Dendritic cell treated with granulocyte-macrophage colony-stimulating factor and Interleukin-4, amounts not matched to agents 40 ng/mL and 50 ng/mL, for 4 days (primary cell): ENCODE measurements at regions of chr14 and their contacts with region 1.

Region 1: GRCh38 chr14:63727774-63728728 is at the start of gene SGPP1:
- H3K4me3 Mint-ChIP-seq: peak within 1 kb of the TSS; percentile 91
- H3K27ac Mint-ChIP-seq: peak within 1 kb of the TSS; percentile 87
- H3K4me1 Mint-ChIP-seq: peaks cover 36% of the 10 kb centered on the region
- H3K27me3 Mint-ChIP-seq: peaks cover 28% of the 10 kb centered on the region

Region 2: GRCh38 chr14:63299351-63300110 is 428.5 kb before region 1 on chr14:
- intact Hi-C with region 1: no loop called
- H3K4me3 Mint-ChIP-seq: no peak overlapping the region
- H3K27ac Mint-ChIP-seq: no peak overlapping the region
- H3K4me1 Mint-ChIP-seq: no peaks in the 10 kb centered on the region
- H3K27me3 Mint-ChIP-seq: no peaks in the 10 kb centered on the region

Region 3: DNA sequence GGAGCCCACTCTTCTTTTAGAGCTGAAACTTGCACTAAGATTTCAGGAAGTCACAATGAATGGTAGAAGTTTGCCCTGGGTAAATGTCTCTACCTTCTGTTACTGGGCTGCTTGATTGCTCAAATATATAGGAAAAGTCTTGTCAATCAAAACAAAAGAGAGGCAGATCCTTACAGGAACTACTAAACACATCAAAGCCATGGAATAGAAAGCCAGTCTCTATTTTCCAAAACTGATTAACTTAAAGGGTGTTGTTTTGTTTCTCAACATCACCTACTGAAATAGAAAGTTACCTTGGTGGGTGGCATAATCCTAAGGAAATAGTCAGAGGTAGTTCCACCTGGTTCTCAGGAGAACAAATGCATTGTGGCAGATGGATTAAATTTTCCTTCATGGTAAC is 409.2 kb before region 1 on chr14 and contains the start of gene GPHB5:
- intact Hi-C with region 1: no loop called
- H3K4me3 Mint-ChIP-seq: no peak within 1 kb of the TSS
- H3K27ac Mint-ChIP-seq: no peak within 1 kb of the TSS
- H3K4me1 Mint-ChIP-seq: no peaks in the 10 kb centered on the region
- H3K27me3 Mint-ChIP-seq: no peaks in the 10 kb centered on the region

Region 4: DNA sequence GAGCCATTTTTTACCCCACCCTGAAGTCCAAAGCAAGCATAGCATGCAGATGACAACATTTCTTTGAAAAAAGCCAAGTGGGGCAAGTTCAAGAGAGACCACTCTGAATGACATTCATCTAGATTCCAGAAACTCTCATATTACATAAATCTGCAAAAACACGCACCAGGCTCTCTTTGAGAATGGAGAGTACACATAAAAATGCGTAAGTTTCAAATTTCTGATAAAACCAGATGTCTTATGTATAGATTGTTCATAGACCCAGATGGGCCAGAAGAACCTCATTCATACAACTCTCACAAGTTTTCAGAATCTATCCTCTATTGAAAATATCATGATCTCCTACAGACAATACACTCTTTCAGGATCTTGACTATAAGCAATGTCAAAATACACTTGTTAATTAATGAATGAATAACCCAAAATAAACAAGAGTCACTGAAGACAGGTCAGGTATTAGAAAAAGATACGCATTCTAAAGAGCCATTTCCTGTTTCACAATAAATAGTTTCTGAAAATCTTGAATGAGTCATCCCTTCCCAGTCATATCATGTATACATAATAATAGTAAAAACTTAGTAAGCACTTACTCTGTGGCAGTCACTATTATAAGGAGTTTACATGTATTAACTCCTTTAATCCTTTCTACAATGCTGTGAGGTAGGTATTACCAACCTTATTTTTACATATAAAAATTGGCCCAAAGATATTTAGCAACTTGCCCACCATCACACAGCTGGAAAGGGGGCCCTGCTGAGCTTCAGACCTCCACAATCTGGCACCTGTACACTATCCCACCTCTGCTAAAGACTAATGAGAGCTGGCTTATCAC is 256.9 kb before region 1 on chr14:
- intact Hi-C with region 1: loop called (anchors 10 kb)
- H3K4me3 Mint-ChIP-seq: no peak overlapping the region
- H3K27ac Mint-ChIP-seq: no peak overlapping the region
- H3K4me1 Mint-ChIP-seq: peaks cover 15% of the 10 kb centered on the region
- H3K27me3 Mint-ChIP-seq: no peaks in the 10 kb centered on the region

Region 5: GRCh38 chr14:63641473-63642228 is 86.4 kb before region 1 on chr14 and contains the start of gene WDR89:
- intact Hi-C with region 1: loop called (anchors 2 kb)
- H3K4me3 Mint-ChIP-seq: peak within 1 kb of the TSS; percentile 98
- H3K27ac Mint-ChIP-seq: peak within 1 kb of the TSS; percentile 99
- H3K4me1 Mint-ChIP-seq: peaks cover 16% of the 10 kb centered on the region
- H3K27me3 Mint-ChIP-seq: no peaks in the 10 kb centered on the region

Region 6: DNA sequence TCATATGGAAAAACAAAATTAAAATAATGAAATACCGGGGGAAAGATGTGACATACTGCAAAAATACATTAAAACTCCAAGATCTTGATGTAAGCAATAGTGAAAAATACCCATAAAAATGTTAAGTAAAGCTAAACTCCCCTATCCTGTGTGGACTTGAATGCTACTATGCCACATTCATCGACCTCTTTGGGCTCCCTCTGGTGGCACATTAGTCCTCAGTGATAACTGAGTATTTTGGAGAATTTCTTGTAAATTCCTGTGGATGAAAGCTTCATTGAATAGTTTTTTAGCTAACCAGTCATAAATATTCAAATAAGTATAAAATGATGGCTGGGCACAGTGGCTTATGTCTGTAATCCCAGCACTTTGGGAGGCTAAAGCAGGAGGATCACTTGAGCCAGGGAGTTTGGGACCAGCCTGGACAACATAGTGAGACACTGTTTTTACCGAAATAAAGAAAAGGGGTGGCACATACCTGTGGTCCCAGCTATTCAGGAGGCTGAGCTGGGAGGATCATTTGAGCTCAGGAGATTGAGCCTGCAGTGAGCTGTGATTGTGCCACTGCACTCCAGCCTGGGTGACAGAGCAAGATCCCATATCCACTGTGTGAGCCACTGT is 42.2 kb after region 1 on chr14:
- intact Hi-C with region 1: loop called (anchors 1 kb)
- H3K4me3 Mint-ChIP-seq: no peak overlapping the region
- H3K27ac Mint-ChIP-seq: no peak overlapping the region
- H3K4me1 Mint-ChIP-seq: peaks cover 10% of the 10 kb centered on the region
- H3K27me3 Mint-ChIP-seq: no peaks in the 10 kb centered on the region

Region 7: GRCh38 chr14:63800651-63801375 is 72.8 kb after region 1 on chr14:
- intact Hi-C with region 1: no loop called
- H3K4me3 Mint-ChIP-seq: no peak overlapping the region
- H3K27ac Mint-ChIP-seq: no peak overlapping the region
- H3K4me1 Mint-ChIP-seq: no peaks in the 10 kb centered on the region
- H3K27me3 Mint-ChIP-seq: peaks cover 4% of the 10 kb centered on the region